BJ (cell line): ENCODE measurements at regions of chr6 and their contacts with region 1.

Region 1: GRCh38 chr6:106360410-106360988 is at the start of gene CRYBG1:
- DNase-seq: no peak
- H3K4me3 ChIP-seq: peak within 1 kb of the TSS; percentile 35
- H3K27me3 ChIP-seq: peaks cover 14% of the 10 kb centered on the region
- CTCF ChIP-seq: peak; percentile 75
- polyA plus RNA-seq, gene CRYBG1: 0.75 and 1.4 TPM in 2 replicates

Region 2: DNA sequence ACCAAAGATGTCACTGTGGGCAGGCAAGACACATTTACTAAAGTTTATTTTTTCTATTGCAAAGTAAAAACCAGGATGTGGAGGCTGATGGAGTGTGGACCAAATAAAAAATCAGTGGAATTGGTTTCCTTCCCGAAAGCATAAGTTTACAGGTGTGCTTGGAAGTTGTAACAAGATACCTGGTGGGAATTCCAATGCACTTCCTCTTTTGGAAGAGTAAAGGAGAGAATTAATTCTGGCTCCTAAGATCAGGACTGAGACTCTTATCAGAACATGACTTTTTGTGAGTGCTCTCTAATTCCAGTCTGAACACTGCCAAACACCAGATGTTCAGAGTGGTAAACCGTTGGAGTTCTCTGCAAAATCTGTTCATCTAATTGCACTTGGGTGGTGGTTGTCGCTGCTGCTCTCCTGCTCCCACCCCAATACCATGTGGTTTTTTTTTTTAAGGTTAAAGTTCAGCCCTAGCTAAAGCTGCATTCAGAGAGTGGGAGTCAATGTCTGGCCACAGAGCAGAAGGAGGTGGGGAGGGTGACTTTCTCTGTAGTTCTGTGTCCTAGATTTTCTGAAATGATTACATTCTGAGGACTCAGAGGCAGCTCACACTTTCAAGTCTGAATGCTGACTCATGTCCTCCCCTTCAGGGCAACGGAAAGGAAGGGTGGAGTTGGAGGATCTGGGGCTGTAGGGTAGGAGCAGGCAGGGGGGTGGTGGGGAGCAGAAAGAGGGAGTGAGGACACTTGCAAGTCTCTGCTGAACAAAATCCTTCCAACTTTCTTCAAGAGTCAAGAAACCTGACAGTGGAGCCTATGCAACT is 550.2 kb before region 1 on chr6:
- CTCF ChIA-PET with region 1: no interaction called
- POLR2A ChIA-PET with region 1: no interaction called
- DNase-seq: peak; percentile 81
- H3K4me3 ChIP-seq: no peak overlapping the region
- H3K27me3 ChIP-seq: no peaks in the 10 kb centered on the region
- CTCF ChIP-seq: no peak

Region 3: GRCh38 chr6:106199998-106200397 is 160.5 kb before region 1 on chr6:
- CTCF ChIA-PET with region 1: no interaction called
- POLR2A ChIA-PET with region 1: no interaction called
- DNase-seq: peak; percentile 86
- H3K4me3 ChIP-seq: no peak overlapping the region
- H3K27me3 ChIP-seq: no peaks in the 10 kb centered on the region
- CTCF ChIP-seq: no peak

Region 4: GRCh38 chr6:106339334-106340029 is 21.0 kb before region 1 on chr6:
- CTCF ChIA-PET with region 1: interaction called, 15 read pairs
- POLR2A ChIA-PET with region 1: no interaction called
- DNase-seq: peak; percentile 8
- H3K4me3 ChIP-seq: no peak overlapping the region
- H3K27me3 ChIP-seq: peaks cover 2% of the 10 kb centered on the region
- CTCF ChIP-seq: peak; percentile 87

Region 5: DNA sequence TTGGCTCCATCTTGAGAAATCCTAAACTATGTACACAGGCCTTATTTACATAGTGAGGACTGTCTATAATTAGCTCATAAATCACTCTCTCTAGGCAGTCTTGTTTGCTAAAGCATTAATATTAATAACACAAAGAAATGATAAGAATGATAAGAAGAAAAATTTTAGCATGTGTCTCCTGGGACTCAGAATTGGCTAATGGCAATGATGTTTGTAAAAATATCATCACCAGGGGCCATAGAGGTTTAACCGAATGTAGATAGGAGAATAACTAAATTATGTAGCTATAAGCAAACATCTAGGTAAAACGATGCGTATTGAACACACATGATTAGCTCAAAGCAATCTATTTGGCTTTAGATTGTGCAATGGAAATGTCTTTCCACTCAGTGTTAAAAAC is 13.2 kb before region 1 on chr6:
- CTCF ChIA-PET with region 1: interaction called, 16 read pairs
- POLR2A ChIA-PET with region 1: no interaction called
- DNase-seq: no peak
- H3K4me3 ChIP-seq: no peak overlapping the region
- H3K27me3 ChIP-seq: no peaks in the 10 kb centered on the region
- CTCF ChIP-seq: no peak

Region 6: GRCh38 chr6:106372838-106373501 is 12.5 kb after region 1 on chr6:
- CTCF ChIA-PET with region 1: interaction called, 33 read pairs
- POLR2A ChIA-PET with region 1: no interaction called
- DNase-seq: no peak
- H3K4me3 ChIP-seq: no peak overlapping the region
- H3K27me3 ChIP-seq: peaks cover 2% of the 10 kb centered on the region; the same call in 1 of the 2 replicates
- CTCF ChIP-seq: no peak